ENCODE measurements at regions of chr16 and their contacts with region 1.

Region 1: DNA sequence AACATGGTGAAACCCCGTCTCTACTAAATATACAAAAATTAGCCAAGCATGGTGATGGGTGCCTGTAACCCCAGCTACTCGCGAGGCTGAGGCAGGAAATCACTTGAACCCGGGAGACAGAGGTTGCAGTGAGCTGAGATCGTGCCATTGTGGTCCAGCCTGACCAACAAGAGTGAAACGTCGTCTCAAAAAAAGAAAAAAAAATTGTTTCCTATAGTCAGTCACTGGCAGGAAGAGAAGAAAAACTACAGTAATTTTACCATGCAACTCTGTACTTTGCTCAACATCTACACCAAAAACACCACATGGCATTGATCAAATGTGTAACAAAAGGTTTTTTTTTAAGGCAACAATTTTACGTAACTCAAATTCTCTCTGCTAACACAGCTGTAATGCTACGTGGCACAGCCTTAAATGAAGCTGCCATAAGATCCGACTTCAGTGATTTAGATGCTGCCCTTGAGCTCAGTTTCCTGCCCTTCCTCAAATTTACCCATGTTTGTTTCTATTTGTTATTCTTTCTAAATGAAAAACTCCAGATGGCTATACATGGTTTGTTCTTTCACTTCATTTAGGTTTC is 40.2 kb downstream of the CNOT1 start:
- DNase-seq: no peak
- ATAC-seq: no peak

Region 2: GRCh38 chr16:58537124-58537906 is 52.1 kb before region 1 on chr16:
- intact Hi-C with region 1: loop called in 1 of 2 experiments (anchors 2 kb)
- DNase-seq: no peak
- ATAC-seq: no peak

Measured in left colon (tissue), 2 donors.